ENCODE measurements at regions of chr2 and their contacts with region 1.

Region 1: DNA sequence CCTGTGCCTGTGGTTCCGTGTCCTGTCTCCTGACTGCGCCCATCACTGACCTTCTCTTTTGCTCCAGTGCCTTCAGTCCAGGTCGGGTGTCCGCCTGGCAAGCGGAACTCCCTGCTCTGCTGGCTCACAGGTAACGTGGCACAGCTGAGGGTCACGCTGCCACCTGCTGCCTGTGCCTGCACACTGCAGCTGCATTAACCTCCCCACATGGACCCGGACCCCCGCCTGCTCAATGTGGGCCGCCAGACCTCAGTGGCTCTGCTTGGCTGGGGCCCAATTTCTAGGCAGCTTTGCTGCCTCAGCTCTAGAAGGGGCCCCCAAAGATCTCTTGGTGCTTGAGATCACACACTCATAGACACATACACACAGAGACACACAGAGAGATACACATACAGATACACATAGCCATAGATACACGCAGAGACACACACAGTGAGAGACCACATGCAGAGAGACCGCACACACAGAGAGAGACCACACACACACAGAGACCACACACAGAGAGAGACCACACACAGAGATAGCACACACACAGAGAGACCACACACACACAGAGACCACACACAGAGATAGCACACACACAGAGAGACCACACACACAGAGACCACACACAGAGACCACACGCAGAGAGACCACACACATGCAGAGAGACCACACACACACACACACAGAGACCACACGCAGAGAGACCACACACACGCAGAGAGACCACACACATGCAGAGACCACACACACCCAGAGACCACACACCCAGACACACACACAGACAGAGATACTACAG is 14.9 kb upstream of the CNNM3 start:
- DNase-seq: peak; percentile 80
- ATAC-seq: peak; percentile 98
- H3K4me3 ChIP-seq: no peak overlapping the region
- H3K4me3 Mint-ChIP-seq: no peak overlapping the region
- H3K27ac ChIP-seq: no peak overlapping the region
- H3K27ac Mint-ChIP-seq: no peak overlapping the region
- H3K4me1 ChIP-seq: peaks cover 25 to 30% of the 10 kb centered on the region in 2 donors
- H3K4me1 Mint-ChIP-seq: peaks cover 4% of the 10 kb centered on the region
- H3K27me3 ChIP-seq: no peaks in the 10 kb centered on the region
- H3K27me3 Mint-ChIP-seq: no peaks in the 10 kb centered on the region
- CTCF ChIP-seq: peak; percentile 94

Region 2: GRCh38 chr2:96669665-96670091 is 131.5 kb before region 1 on chr2:
- CTCF ChIA-PET with region 1: no interaction called
- POLR2A ChIA-PET with region 1: no interaction called
- intact Hi-C with region 1: no loop called
- DNase-seq: no peak
- ATAC-seq: no peak
- H3K4me3 ChIP-seq: no peak overlapping the region
- H3K4me3 Mint-ChIP-seq: no peak overlapping the region
- H3K27ac ChIP-seq: no peak overlapping the region
- H3K27ac Mint-ChIP-seq: no peak overlapping the region
- H3K4me1 ChIP-seq: no peaks in the 10 kb centered on the region
- H3K4me1 Mint-ChIP-seq: no peaks in the 10 kb centered on the region
- H3K27me3 ChIP-seq: no peaks in the 10 kb centered on the region
- H3K27me3 Mint-ChIP-seq: peaks cover 3% of the 10 kb centered on the region
- CTCF ChIP-seq: no peak

Region 3: DNA sequence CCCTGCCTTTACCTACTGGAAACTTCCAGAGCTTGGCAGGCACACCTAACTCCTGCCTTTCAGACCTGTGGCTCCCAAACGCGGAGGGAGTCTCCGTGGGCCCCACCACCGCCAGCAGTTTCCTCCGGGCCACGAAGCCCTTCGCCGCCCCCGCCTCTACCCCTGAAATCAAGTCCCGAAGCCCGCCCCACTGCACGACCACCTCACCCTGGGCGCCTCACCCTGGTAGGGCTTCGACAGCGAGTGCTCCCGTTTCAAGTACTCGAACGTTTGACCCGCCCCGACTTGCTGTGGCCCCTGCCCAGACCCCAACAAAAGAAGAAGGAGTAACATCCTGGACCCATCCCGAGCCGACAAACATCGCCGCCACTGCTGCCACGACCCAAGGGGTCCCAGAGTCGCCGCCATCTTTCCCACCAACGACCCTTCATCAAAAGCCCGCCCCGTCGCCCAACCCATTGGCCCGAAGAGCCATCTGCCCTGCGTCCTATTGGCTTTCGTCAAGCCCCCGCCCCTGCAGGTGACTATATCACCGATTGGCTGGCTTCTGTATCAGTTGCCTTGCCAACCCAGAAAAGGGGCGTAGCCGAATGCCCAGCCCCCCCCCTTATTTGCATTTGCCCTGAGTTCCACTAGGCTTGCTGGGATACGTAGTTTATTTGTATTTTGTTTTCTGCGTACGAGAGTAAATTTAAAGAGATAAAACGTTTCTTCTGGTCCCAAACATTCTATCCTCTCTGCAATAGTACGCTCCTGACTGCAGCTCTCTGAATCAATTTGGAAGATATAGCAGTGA is 61.4 kb before region 1 on chr2 and contains the start of gene LMAN2L:
- CTCF ChIA-PET with region 1: no interaction called
- POLR2A ChIA-PET with region 1: no interaction called
- intact Hi-C with region 1: loop called (anchors 1 kb)
- DNase-seq: peak; percentile 97
- ATAC-seq: peak; percentile 98
- H3K4me3 ChIP-seq: peak within 1 kb of the TSS; percentile 67 to 93 (median 88)
- H3K4me3 Mint-ChIP-seq: peak within 1 kb of the TSS; percentile 97
- H3K27ac ChIP-seq: peak within 1 kb of the TSS; percentile 80 to 85
- H3K27ac Mint-ChIP-seq: peak within 1 kb of the TSS; percentile 97
- H3K4me1 ChIP-seq: peaks cover 14 to 25% of the 10 kb centered on the region in 2 donors
- H3K4me1 Mint-ChIP-seq: peaks cover 29% of the 10 kb centered on the region
- H3K27me3 ChIP-seq: no peaks in the 10 kb centered on the region
- H3K27me3 Mint-ChIP-seq: no peaks in the 10 kb centered on the region
- CTCF ChIP-seq: no peak
- total RNA-seq, gene LMAN2L: 10.7 TPM in 2 replicates

Region 4: DNA sequence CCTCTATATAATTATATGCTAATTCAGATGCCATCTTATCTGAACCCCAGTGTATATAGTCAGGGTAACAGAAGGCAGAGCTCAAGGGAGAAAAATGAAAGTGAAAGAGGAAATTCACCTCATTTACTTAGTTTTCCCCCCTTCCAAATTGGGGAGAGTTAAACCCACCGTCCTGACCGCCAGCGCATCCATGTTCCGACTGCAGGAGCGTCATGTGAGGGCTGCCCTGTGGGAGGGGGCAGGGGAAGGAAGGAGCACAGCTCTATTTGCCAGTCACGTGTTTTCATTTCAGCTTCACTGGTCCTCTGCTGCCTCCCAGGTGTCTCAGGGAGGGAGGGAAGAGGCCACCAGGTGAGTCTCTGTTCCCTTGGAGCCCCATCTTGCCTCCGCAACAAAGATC is 27.3 kb before region 1 on chr2:
- CTCF ChIA-PET with region 1: interaction called, 5 read pairs
- POLR2A ChIA-PET with region 1: no interaction called
- intact Hi-C with region 1: loop called (anchors 2 kb)
- DNase-seq: peak; percentile 75
- ATAC-seq: peak; percentile 70
- H3K4me3 ChIP-seq: peak overlapping the region; percentile 11 to 67 (median 58)
- H3K4me3 Mint-ChIP-seq: peak overlapping the region; percentile 94
- H3K27ac ChIP-seq: peak overlapping the region; percentile 56 to 78
- H3K27ac Mint-ChIP-seq: peak overlapping the region; percentile 93
- H3K4me1 ChIP-seq: peaks cover 23 to 47% of the 10 kb centered on the region in 2 donors
- H3K4me1 Mint-ChIP-seq: peaks cover 44% of the 10 kb centered on the region
- H3K27me3 ChIP-seq: no peaks in the 10 kb centered on the region
- H3K27me3 Mint-ChIP-seq: no peaks in the 10 kb centered on the region
- CTCF ChIP-seq: no peak

Measured in B cell (primary cell).